A673 (cell line): ENCODE measurements at regions of chr1 and their contacts with region 1.

Region 1: DNA sequence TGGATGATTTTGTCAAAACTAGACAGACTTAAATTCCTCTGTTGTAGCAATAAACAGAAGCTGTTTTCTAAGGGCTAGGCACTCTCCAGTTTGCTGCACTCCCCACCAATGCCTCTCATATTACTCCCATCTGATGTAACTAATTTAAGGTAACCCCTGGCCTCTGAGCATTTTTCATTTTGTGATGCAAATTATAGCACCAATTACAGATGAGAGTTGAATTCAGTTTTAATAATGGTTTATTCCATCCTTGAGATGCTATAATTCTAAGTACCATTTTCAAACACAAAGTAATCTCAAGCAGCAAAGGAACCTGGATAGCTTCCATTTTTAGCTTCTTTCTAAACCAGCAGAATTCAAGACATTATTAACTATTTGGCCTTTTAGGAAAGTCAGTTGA is 280.4 kb upstream of the DAB1 start:
- DNase-seq: peak; percentile 95
- H3K4me3 ChIP-seq: no peak overlapping the region
- H3K27ac ChIP-seq: peak overlapping the region; percentile 98
- H3K4me1 ChIP-seq: peaks cover 63% of the 10 kb centered on the region
- H3K27me3 ChIP-seq: no peaks in the 10 kb centered on the region
- CTCF ChIP-seq: no peak

Region 2: DNA sequence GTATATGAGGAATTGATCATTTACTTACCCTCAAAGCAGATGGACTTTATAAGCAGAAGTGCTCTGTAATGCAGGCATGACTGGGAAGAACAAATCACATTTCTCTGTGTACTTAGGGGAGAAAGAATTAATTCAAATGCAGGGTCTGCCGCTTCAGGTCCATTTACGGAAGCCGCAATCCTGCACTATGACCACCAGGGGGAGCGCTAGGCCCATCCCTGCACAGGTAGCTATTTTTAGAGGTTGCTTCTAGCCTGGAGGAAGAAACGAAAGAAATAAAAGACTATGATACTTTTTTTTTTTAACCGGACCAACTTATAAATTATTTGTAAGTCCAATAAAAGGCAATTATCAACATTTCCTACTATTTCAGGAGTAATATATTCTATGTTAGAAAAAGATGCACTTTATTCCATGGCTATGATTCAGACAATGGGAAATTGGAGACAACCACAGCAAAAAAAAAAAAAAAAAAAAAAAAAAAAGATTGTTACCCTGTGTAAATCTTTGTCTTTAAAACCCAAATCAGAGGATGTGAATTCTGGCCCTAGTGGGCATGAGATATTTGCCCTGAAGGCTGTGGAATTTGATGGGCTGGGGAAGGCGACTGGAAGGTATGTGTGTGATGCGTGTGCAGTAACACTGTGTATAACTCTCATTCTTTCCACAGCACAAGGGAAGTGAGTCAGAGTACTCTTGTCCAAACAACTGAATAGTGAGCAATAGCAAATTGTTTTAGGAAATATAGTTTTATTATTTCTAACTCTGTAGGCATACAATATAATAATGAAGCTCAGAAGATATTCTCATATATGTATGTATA is 872.1 kb before region 1 on chr1:
- CTCF ChIA-PET with region 1: no interaction called
- POLR2A ChIA-PET with region 1: no interaction called
- intact Hi-C with region 1: loop called (anchors 2 kb)
- DNase-seq: peak; percentile 86
- H3K4me3 ChIP-seq: no peak overlapping the region
- H3K27ac ChIP-seq: no peak overlapping the region
- H3K4me1 ChIP-seq: peaks cover 10% of the 10 kb centered on the region
- H3K27me3 ChIP-seq: no peaks in the 10 kb centered on the region
- CTCF ChIP-seq: peak; percentile 97

Region 3: GRCh38 chr1:57272150-57272549 is 432.1 kb before region 1 on chr1:
- CTCF ChIA-PET with region 1: no interaction called
- POLR2A ChIA-PET with region 1: no interaction called
- intact Hi-C with region 1: loop called (anchors 2 kb)
- DNase-seq: peak; percentile 34
- H3K4me3 ChIP-seq: no peak overlapping the region
- H3K27ac ChIP-seq: peak overlapping the region; percentile 15
- H3K4me1 ChIP-seq: peaks cover 76% of the 10 kb centered on the region
- H3K27me3 ChIP-seq: no peaks in the 10 kb centered on the region
- CTCF ChIP-seq: no peak

Region 4: DNA sequence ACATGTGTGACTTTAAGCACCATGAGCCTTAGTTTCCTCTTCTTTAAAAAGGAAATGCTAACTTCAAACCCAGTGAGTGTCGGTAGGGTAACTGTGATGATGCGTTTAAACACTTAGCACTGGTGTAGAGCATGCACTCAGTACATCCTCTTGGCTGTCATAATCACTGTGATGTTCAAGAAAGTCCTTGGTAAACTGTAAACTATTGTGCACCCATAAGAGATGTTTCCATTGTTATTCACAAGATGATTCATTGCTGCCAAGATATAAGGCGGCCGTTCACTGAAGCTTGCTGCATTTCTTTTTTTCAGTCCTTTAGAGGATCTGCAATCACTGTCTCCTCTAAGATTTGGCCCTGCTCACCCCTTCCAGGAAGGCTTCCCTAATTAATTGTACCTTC is 218.6 kb before region 1 on chr1:
- CTCF ChIA-PET with region 1: no interaction called
- POLR2A ChIA-PET with region 1: interaction called, 29 read pairs
- intact Hi-C with region 1: no loop called
- DNase-seq: no peak
- H3K4me3 ChIP-seq: no peak overlapping the region
- H3K27ac ChIP-seq: no peak overlapping the region
- H3K4me1 ChIP-seq: peaks cover 15% of the 10 kb centered on the region
- H3K27me3 ChIP-seq: no peaks in the 10 kb centered on the region
- CTCF ChIP-seq: no peak

Region 5: DNA sequence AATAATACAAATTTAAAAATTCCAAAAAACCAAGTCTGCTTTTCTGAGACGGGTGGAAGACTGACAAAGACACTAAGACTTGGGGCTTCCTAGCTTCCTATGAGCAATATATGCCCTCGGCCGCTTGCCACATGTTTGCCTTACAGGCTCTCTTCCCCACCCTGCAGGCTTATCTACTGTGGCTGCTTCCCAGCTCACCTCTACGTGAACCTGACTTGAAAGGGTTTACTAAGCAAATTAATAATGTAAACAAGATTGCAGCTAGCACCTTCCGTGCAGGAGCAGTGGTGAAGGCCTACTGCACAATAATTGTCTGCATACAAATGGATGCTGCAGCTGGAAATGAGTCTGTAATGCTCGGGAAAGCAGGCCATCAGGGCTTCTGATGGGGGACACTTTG is 127.5 kb before region 1 on chr1:
- CTCF ChIA-PET with region 1: no interaction called
- POLR2A ChIA-PET with region 1: interaction called, 13 read pairs
- intact Hi-C with region 1: no loop called
- DNase-seq: no peak
- H3K4me3 ChIP-seq: no peak overlapping the region
- H3K27ac ChIP-seq: no peak overlapping the region
- H3K4me1 ChIP-seq: peaks cover 5% of the 10 kb centered on the region
- H3K27me3 ChIP-seq: no peaks in the 10 kb centered on the region
- CTCF ChIP-seq: no peak

Region 6: DNA sequence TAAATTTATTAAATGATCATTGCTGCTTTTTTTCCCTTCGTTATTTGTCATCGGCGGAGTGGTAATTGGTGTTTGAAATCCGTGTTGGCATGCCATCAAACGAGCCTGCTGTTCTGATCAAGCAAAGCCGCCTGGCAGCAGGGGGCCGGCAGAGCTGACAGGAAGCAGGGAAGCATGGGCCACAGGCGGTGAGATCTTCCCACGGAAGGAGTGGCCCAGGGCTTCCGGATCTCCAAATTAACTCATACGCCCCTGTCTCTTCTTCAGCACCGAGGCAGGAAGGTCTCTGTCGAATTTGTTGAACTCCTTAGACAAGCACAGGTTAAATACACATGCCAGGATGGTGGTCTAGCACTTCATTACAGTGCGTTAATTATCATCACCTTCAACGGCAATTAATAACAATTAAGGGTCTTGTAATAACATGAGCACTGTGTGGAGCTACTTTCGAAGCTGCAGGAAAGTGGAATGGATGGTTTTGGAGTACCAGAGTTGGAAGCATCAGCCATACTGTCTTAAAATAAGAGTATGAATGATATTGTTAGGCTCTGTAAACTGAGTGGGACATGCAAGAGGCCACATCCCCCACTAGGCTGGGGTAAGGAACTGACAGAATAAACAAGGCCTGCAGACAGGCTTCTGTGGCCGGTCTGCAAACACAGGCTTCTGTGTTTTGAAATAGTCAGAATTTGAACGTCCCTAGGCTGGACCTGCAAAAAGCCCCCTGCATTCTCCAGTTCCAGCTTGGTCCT is 81.0 kb before region 1 on chr1:
- CTCF ChIA-PET with region 1: interaction called, 3 read pairs
- POLR2A ChIA-PET with region 1: no interaction called
- intact Hi-C with region 1: loop called (anchors 2 kb)
- DNase-seq: peak; percentile 98
- H3K4me3 ChIP-seq: no peak overlapping the region
- H3K27ac ChIP-seq: peak overlapping the region; percentile 82
- H3K4me1 ChIP-seq: peaks cover 68% of the 10 kb centered on the region
- H3K27me3 ChIP-seq: no peaks in the 10 kb centered on the region
- CTCF ChIP-seq: no peak

Region 7: GRCh38 chr1:58047265-58047858 is 343.1 kb after region 1 on chr1:
- CTCF ChIA-PET with region 1: no interaction called
- POLR2A ChIA-PET with region 1: no interaction called
- intact Hi-C with region 1: no loop called
- DNase-seq: peak; percentile 69
- H3K4me3 ChIP-seq: no peak overlapping the region
- H3K27ac ChIP-seq: no peak overlapping the region
- H3K4me1 ChIP-seq: peaks cover 9% of the 10 kb centered on the region
- H3K27me3 ChIP-seq: no peaks in the 10 kb centered on the region
- CTCF ChIP-seq: peak; percentile 92

Region 8: DNA sequence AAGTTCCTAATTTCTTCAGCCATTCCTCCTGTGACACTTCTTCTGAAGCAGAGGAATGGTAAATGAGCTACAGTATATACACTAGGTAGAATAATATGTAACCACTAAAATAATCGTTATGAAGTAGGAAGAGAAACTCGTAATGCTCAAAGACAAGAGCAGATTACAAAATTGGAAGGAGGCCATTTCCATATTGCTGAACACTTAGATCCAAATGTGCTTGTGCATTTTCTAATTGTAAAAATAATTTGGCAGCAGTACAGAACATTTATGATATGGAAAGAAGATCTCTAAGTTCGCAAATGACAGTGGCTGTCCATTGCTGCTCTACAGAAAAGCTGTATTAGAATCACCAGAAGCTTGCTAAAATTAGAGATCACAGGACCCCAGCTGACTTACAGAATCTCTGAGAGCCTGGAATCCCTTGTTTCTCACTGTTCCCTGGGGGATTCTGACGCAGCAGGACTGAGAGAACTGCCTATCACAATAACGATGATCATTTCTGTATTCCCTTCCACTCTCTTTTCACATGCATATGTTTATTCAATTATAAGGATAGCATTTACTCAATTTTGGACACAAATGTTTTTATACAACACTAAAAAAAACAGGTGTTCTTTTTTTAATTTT is 600.2 kb after region 1 on chr1:
- CTCF ChIA-PET with region 1: no interaction called
- POLR2A ChIA-PET with region 1: no interaction called
- intact Hi-C with region 1: loop called (anchors 2 kb)
- DNase-seq: peak; percentile 79
- H3K4me3 ChIP-seq: no peak overlapping the region
- H3K27ac ChIP-seq: peak overlapping the region; percentile 20
- H3K4me1 ChIP-seq: peaks cover 40% of the 10 kb centered on the region
- H3K27me3 ChIP-seq: no peaks in the 10 kb centered on the region
- CTCF ChIP-seq: no peak